Endothelial cell of umbilical vein (primary cell): ENCODE measurements at regions of chrX and their contacts with region 1.

Region 1: DNA sequence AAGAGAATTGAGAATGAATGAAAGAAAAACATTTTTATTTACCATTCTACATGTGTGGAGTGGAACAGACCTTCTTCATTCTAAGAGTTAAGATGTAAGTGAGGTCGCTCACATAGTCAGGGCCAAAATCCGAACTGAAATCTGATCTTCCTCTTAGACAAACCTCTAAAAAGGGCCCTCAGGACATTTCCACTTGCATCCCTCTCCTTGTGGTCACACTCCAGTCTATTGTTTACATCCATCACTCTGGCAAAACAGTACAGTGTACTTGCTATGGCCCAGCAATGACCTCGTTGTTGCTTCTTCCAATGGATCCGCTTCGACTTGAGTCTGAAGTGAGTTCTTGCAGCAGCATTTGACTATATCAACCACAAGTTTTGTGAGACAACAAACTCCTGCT is 54.2 kb downstream of the MOSPD2 start:
- DNase-seq: no peak
- H3K4me3 ChIP-seq: no peak overlapping the region
- H3K27ac ChIP-seq: no peak overlapping the region
- H3K4me1 ChIP-seq: peaks cover 12% of the 10 kb centered on the region
- H3K27me3 ChIP-seq: no peaks in the 10 kb centered on the region
- CTCF ChIP-seq: no peak
- POLR2A ChIP-seq: no peak

Region 2: GRCh38 chrX:14963447-14964236 is 36.2 kb after region 1 on chrX:
- CTCF ChIA-PET with region 1: interaction called, 8 read pairs
- POLR2A ChIA-PET with region 1: no interaction called
- dilution Hi-C with region 1: no loop called
- intact Hi-C with region 1: loop called (anchors 1 kb)
- DNase-seq: peak; percentile 29
- H3K4me3 ChIP-seq: no peak overlapping the region
- H3K27ac ChIP-seq: peak overlapping the region; percentile 41
- H3K4me1 ChIP-seq: peaks cover 14% of the 10 kb centered on the region
- H3K27me3 ChIP-seq: no peaks in the 10 kb centered on the region
- CTCF ChIP-seq: no peak
- POLR2A ChIP-seq: no peak

Region 3: GRCh38 chrX:15769300-15769954 is 842.0 kb after region 1 on chrX:
- CTCF ChIA-PET with region 1: no interaction called
- POLR2A ChIA-PET with region 1: no interaction called
- dilution Hi-C with region 1: no loop called
- intact Hi-C with region 1: no loop called
- DNase-seq: no peak
- H3K4me3 ChIP-seq: no peak overlapping the region
- H3K27ac ChIP-seq: no peak overlapping the region
- H3K4me1 ChIP-seq: no peaks in the 10 kb centered on the region
- H3K27me3 ChIP-seq: no peaks in the 10 kb centered on the region
- CTCF ChIP-seq: no peak
- POLR2A ChIP-seq: no peak